ENCODE measurements at regions of chr10 and their contacts with region 1.

Region 1: GRCh38 chr10:33155720-33156638 is 178.5 kb downstream of the NRP1 start:
- DNase-seq: peak; percentile 72
- H3K4me3 Mint-ChIP-seq: peak overlapping the region; percentile 6
- H3K27ac Mint-ChIP-seq: peak overlapping the region; percentile 96
- H3K4me1 Mint-ChIP-seq: peaks cover 60% of the 10 kb centered on the region
- H3K27me3 Mint-ChIP-seq: no peaks in the 10 kb centered on the region
- CTCF ChIP-seq: peak; percentile 76

Region 2: DNA sequence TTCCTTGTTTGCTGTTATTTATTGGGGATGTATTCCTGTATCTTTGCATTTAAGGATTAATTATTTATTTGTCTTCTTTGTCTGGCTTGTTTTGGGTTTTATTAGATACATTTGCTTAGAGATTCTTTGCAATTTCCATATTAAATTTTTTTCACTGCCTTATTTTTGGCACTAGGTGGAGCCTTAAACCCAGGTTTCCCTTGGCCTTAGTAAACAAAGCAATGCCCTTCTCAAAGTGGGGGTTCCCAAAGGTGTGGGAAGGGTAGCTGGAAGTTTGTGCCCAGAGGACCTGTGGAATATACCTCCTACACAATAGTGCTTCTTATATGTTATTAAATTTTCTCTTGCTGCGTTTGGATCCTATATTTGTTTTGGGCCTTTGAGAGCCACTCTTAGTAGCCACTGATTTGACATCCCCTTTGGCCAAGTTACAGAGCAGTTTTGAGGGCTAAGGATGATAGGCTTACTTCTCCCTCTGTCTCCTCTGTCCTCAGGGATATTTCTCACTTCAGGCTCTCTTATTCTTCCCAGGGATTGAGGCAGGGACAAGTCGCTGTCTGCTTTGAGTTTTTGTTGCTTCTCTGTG is 360.3 kb before region 1 on chr10:
- CTCF ChIA-PET with region 1: no interaction called
- intact Hi-C with region 1: loop called (anchors 5 kb)
- DNase-seq: peak; percentile 23
- H3K4me3 Mint-ChIP-seq: no peak overlapping the region
- H3K27ac Mint-ChIP-seq: no peak overlapping the region
- H3K4me1 Mint-ChIP-seq: peaks cover 17% of the 10 kb centered on the region
- H3K27me3 Mint-ChIP-seq: no peaks in the 10 kb centered on the region
- CTCF ChIP-seq: peak; percentile 48

Region 3: GRCh38 chr10:33115738-33116719 is 40.0 kb before region 1 on chr10:
- CTCF ChIA-PET with region 1: no interaction called
- intact Hi-C with region 1: loop called (anchors 2 kb)
- DNase-seq: no peak
- H3K4me3 Mint-ChIP-seq: no peak overlapping the region
- H3K27ac Mint-ChIP-seq: no peak overlapping the region
- H3K4me1 Mint-ChIP-seq: peaks cover 29% of the 10 kb centered on the region
- H3K27me3 Mint-ChIP-seq: no peaks in the 10 kb centered on the region
- CTCF ChIP-seq: peak; percentile 32

Region 4: GRCh38 chr10:33134011-33134751 is 21.8 kb before region 1 on chr10:
- CTCF ChIA-PET with region 1: interaction called, 3 read pairs
- intact Hi-C with region 1: loop called (anchors 1 kb)
- DNase-seq: peak; percentile 91
- H3K4me3 Mint-ChIP-seq: peak overlapping the region; percentile 28
- H3K27ac Mint-ChIP-seq: peak overlapping the region; percentile 100
- H3K4me1 Mint-ChIP-seq: peaks cover 67% of the 10 kb centered on the region
- H3K27me3 Mint-ChIP-seq: no peaks in the 10 kb centered on the region
- CTCF ChIP-seq: no peak

Region 5: GRCh38 chr10:33193701-33194521 is 37.9 kb after region 1 on chr10:
- CTCF ChIA-PET with region 1: no interaction called
- intact Hi-C with region 1: loop called (anchors 2 kb)
- DNase-seq: peak; percentile 32
- H3K4me3 Mint-ChIP-seq: no peak overlapping the region
- H3K27ac Mint-ChIP-seq: peak overlapping the region; percentile 5
- H3K4me1 Mint-ChIP-seq: peaks cover 54% of the 10 kb centered on the region
- H3K27me3 Mint-ChIP-seq: no peaks in the 10 kb centered on the region
- CTCF ChIP-seq: peak; percentile 5